ENCODE measurements at regions of chrX and their contacts with region 1.

Region 1: DNA sequence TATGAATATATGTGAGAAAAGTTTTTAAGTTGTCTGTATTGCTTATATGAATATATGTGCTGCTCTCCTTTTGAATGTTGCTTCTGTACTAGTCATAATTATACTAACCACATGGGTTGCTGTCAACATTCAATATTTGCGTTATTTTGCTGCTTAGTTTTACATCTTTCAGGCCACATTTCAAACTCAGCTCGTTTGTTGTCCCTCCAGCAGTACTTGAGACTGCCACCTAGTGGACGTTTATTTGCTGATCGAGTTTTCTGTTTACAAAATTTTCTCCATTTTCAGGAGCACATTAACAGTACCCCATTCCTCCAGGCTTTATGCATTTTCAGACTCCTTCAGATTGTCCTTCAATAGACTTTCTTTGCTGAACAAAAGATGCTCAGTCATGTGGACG is 75.8 kb downstream of the NUDT11 start:
- DNase-seq: no peak
- ATAC-seq: no peak
- H3K4me3 Mint-ChIP-seq: no peak overlapping the region
- H3K27ac Mint-ChIP-seq: no peak overlapping the region
- H3K4me1 Mint-ChIP-seq: peaks cover 19% of the 10 kb centered on the region
- H3K27me3 Mint-ChIP-seq: no peaks in the 10 kb centered on the region
- CTCF ChIP-seq: peak; percentile 53

Region 2: DNA sequence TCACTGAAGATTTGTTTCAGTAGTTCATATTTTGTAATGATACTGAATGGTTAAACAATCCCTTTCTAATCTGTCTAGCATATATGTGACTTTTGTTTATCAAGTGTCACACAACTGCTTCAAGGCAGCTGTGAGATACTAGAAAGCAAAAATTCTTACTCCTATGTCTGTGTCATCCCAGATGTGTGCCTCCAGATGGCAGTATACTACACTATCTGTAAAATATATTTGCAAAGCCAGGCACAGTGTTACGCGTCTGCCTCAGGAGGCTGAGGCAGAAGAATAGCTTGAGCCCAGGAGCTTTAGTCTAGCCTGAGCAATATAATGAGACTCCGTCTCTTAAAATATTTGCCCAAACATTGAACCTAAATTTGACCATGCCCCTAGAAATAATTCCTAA is 84.0 kb before region 1 on chrX:
- CTCF ChIA-PET with region 1: interaction called, 52 read pairs
- POLR2A ChIA-PET with region 1: no interaction called
- DNase-seq: peak; percentile 10
- ATAC-seq: peak; percentile 44
- H3K4me3 Mint-ChIP-seq: no peak overlapping the region
- H3K27ac Mint-ChIP-seq: no peak overlapping the region
- H3K4me1 Mint-ChIP-seq: peaks cover 22% of the 10 kb centered on the region
- H3K27me3 Mint-ChIP-seq: 0 out of 2 replicates have a peak, but pooled peaks cover 3% of the 10 kb centered on the region
- CTCF ChIP-seq: no peak; the same call in 1 of the 2 replicates

Region 3: GRCh38 chrX:51361251-51361650 is 59.4 kb before region 1 on chrX:
- CTCF ChIA-PET with region 1: no interaction called
- POLR2A ChIA-PET with region 1: no interaction called
- DNase-seq: peak; percentile 23
- ATAC-seq: peak; percentile 66; the same call in 1 of the 2 replicates
- H3K4me3 Mint-ChIP-seq: no peak overlapping the region
- H3K27ac Mint-ChIP-seq: no peak overlapping the region
- H3K4me1 Mint-ChIP-seq: peaks cover 4% of the 10 kb centered on the region
- H3K27me3 Mint-ChIP-seq: no peaks in the 10 kb centered on the region; the same call in 1 of the 2 replicates
- CTCF ChIP-seq: no peak

Region 4: DNA sequence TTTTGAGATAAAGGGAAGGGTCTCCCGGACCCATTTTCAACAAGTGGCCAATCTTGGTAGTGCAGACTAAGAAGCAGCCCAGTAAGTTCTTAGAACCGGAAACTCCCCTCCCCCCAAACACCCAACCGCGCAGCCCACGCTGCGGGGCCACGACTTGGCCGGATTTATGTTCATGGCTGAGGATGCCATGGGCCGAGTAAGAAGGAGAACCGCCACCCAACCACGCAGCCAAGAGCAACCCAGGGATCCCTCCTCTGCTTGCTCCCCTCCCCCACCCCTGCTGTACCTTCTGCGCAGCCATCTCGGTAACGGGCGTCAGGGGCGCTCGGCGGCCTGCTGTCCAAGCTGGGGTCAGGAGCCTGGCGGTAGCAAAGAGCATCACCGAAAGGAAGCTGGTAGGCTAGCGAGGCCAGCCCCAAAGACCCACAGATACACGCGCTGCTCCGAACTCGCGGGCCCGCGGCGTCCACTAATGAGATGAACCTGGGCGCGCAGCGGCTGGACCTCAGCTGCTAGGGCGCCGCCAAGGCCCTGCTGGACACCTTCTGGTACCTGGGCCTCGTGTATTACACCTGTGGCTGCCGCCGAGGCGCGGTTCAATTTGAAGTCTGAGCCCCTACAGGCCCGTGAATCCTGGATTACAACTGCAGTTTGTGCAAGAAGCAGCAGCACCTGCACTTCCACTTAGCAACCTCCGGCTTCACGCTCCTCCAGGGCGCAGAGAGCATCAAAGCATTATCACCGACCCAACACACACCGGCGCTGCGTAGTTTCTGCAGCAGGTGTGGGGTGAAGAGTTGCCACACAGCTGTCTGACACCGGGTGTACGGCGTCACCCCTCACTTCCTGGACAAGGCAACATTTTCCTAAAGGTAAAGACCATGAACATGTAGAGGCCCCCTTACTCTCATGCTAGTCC is 24.5 kb before region 1 on chrX:
- CTCF ChIA-PET with region 1: interaction called, 13 read pairs
- POLR2A ChIA-PET with region 1: no interaction called
- DNase-seq: peak; percentile 40
- ATAC-seq: peak; percentile 93
- H3K4me3 Mint-ChIP-seq: peak overlapping the region; percentile 74
- H3K27ac Mint-ChIP-seq: no peak overlapping the region
- H3K4me1 Mint-ChIP-seq: 0 out of 2 replicates have a peak, but pooled peaks cover 5% of the 10 kb centered on the region
- H3K27me3 Mint-ChIP-seq: no peaks in the 10 kb centered on the region
- CTCF ChIP-seq: peak; percentile 36; the same call in 1 of the 2 replicates

Region 5: DNA sequence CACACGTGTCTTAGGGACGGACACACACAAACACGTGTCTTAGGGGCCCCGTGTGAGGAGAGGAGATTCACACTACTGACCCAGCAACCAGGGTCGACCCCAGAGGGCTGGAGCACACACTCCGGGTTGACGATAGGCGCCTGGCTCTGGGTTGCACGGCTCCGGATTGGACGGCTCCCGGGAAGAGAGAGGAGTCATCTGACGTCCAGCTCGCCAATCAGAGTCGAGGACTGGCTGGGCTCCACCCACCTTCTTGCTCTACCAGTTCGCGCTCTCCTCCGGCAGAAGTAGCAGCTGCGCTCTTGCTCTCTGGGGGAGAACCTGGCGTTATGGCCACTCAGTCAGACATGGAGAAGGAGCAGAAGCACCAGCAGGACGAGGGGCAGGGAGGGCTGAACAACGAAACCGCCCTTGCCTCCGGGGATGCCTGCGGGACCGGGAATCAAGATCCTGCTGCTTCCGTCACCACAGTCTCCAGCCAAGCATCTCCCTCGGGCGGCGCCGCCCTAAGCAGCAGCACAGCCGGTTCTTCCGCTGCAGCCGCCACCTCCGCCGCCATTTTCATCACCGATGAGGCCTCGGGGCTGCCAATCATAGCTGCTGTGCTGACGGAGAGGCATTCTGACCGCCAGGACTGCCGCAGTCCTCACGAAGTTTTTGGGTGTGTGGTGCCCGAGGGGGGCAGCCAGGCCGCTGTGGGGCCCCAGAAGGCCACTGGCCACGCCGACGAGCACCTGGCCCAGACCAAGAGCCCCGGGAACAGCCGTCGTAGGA is 13.7 kb before region 1 on chrX:
- CTCF ChIA-PET with region 1: interaction called, 14 read pairs
- POLR2A ChIA-PET with region 1: no interaction called
- DNase-seq: no peak
- ATAC-seq: no peak
- H3K4me3 Mint-ChIP-seq: no peak overlapping the region
- H3K27ac Mint-ChIP-seq: no peak overlapping the region
- H3K4me1 Mint-ChIP-seq: peaks cover 14% of the 10 kb centered on the region
- H3K27me3 Mint-ChIP-seq: no peaks in the 10 kb centered on the region
- CTCF ChIP-seq: no peak

Region 6: GRCh38 chrX:51461053-51462044 is 40.7 kb after region 1 on chrX:
- CTCF ChIA-PET with region 1: interaction called, 16 read pairs
- POLR2A ChIA-PET with region 1: no interaction called
- DNase-seq: peak; percentile 28
- ATAC-seq: peak; percentile 62; the same call in 1 of the 2 replicates
- H3K4me3 Mint-ChIP-seq: no peak overlapping the region
- H3K27ac Mint-ChIP-seq: no peak overlapping the region
- H3K4me1 Mint-ChIP-seq: peaks cover 16% of the 10 kb centered on the region
- H3K27me3 Mint-ChIP-seq: no peaks in the 10 kb centered on the region
- CTCF ChIP-seq: peak; percentile 61

Measured in WTC11 (cell line).